ENCODE measurements at regions of chr9 and their contacts with region 1.

Region 1: DNA sequence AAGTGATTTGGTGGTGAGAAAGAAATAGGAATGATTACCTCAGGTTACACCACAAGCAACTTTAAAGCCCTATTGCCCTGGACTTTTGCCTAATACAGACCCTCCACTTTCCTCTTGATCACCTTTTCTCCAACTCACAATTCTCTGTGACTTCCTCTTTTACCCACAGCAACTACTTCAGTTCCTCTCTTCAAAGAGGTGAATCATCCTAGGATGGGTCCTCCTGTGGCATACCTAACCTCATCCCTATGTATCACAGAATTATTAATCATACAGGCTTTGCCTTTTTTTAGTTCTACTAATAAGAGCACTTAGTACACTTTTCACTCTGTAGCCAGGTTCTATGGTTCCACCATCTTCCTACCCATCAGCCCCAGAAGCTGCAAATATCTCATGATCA is 19.6 kb upstream of the INSL6 start:
- DNase-seq: no peak
- ATAC-seq: no peak
- H3K4me3 ChIP-seq: no peak overlapping the region
- H3K27ac ChIP-seq: no peak overlapping the region
- H3K4me1 ChIP-seq: no peaks in the 10 kb centered on the region
- H3K27me3 ChIP-seq: no peaks in the 10 kb centered on the region
- CTCF ChIP-seq: no peak
- POLR2A ChIP-seq: no peak

Region 2: DNA sequence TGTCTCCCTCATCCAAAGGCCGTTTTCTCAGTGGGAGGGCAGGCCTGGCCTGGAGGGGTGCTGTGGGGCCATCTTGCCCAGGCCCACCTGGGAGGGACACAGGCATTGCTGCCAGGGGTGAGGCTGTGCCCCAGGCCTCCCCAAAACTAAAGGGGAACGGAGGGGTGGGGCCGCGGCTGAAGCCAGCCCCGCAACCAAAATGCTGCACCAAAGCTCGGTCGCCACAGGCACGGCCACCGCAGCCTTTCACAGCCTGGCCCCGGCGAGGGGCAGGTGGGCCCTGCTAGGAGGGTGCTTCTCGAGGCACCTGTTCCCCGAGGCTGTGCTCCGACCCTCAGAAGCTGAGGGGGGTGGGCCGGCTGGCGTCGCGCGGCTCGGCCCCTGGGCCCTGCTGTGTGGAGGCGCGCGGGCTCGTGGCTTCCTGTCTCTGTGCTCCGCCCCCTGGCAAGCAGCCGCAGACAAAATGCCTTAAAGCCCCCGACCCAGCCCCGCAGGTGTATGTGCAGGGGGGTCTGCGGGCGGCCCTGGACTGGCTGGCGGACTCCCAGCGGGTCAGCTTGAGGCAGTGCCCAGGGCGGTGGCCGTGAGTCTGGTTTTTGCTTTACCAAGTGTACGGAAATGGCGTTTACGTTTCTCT is 162.3 kb before region 1 on chr9:
- in situ Hi-C with region 1: no loop called
- intact Hi-C with region 1: no loop called
- DNase-seq: no peak
- ATAC-seq: no peak
- H3K4me3 ChIP-seq: no peak overlapping the region
- H3K27ac ChIP-seq: peak overlapping the region; percentile 51 to 66 (median 59)
- H3K4me1 ChIP-seq: peaks cover 16 to 28% of the 10 kb centered on the region in 2 donors
- H3K27me3 ChIP-seq: no peaks in the 10 kb centered on the region
- CTCF ChIP-seq: no peak
- POLR2A ChIP-seq: no peak

Region 3: GRCh38 chr9:5263351-5264218 is 58.5 kb after region 1 on chr9:
- in situ Hi-C with region 1: loop called in 1 of 4 experiments (anchors 10 kb)
- intact Hi-C with region 1: no loop called
- DNase-seq: no peak
- ATAC-seq: no peak
- H3K4me3 ChIP-seq: no peak overlapping the region
- H3K27ac ChIP-seq: no peak overlapping the region
- H3K4me1 ChIP-seq: no peaks in the 10 kb centered on the region
- H3K27me3 ChIP-seq: no peaks in the 10 kb centered on the region
- CTCF ChIP-seq: no peak
- POLR2A ChIP-seq: no peak